Activated CD8-positive, alpha-beta memory T cell treated with anti-CD3 and anti-CD28 coated beads, Interleukin-2, amount 10 ng/mL, durations not matched to agents 7 days and 5 days (primary cell): ENCODE measurements at regions of chr12 and their contacts with region 1.

Region 1: GRCh38 chr12:49347384-49348237 is 923 bp downstream of the DNAJC22 start:
- DNase-seq: peak; percentile 78
- ATAC-seq: peak; percentile 83
- H3K4me3 Mint-ChIP-seq: peak overlapping the region; percentile 61
- H3K27ac Mint-ChIP-seq: no peak overlapping the region
- H3K4me1 Mint-ChIP-seq: peaks cover 30% of the 10 kb centered on the region
- H3K27me3 Mint-ChIP-seq: peaks cover 75% of the 10 kb centered on the region

Region 2: GRCh38 chr12:48851883-48852733 is 495.5 kb before region 1 on chr12 and contains the start of gene DDX23:
- CTCF ChIA-PET with region 1: no interaction called
- DNase-seq: peak; percentile 97
- ATAC-seq: peak; percentile 94
- H3K4me3 Mint-ChIP-seq: peak within 1 kb of the TSS; percentile 96
- H3K27ac Mint-ChIP-seq: peak within 1 kb of the TSS; percentile 97
- H3K4me1 Mint-ChIP-seq: peaks cover 33% of the 10 kb centered on the region
- H3K27me3 Mint-ChIP-seq: no peaks in the 10 kb centered on the region
- total RNA-seq, gene DDX23: 146 to 157 TPM

Region 3: GRCh38 chr12:49296034-49296835 is 51.4 kb before region 1 on chr12:
- CTCF ChIA-PET with region 1: interaction called, 92 read pairs
- DNase-seq: peak; percentile 77
- ATAC-seq: peak; percentile 71
- H3K4me3 Mint-ChIP-seq: peak overlapping the region; percentile 67
- H3K27ac Mint-ChIP-seq: no peak overlapping the region
- H3K4me1 Mint-ChIP-seq: peaks cover 20% of the 10 kb centered on the region
- H3K27me3 Mint-ChIP-seq: peaks cover 63% of the 10 kb centered on the region

Region 4: DNA sequence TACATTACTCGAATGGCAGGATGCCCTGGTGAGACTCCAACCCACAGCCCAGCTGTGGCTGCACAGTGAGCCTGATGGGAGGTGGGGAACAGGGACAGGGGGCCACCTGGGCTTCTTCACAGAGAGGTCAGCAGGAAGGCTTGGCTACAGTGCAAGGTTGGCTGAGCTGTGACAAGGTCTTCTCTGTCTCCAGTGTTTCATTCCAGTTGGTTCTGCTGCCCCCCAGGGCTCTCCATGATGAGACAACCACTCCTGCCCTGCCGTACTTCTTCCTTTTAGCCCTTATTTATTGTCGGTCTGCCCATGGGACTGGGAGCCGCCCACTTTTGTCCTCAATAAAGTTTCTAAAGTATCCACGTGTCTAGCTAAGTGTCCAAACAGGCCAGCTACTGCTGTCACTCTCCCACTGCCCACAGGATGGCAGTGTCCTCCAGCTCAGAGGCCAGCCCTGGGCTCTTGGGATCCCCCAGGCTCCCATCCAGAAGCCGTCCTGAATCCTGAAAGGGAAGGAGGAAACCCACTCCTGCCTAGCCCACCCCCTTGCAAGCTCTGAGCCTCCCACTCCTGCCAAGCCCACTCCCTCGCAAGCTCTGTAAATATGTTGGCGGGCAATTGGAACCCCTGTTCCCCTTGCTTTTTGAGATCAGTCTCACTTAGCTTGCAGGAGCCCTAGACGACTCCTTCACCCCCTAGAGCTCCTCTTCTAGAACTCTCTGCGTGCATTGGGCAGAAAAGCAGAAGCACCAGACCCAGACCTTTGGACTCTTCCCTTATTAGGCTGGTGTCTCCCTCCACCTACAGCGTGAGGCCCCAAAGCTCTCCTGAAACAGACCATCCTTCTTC is 16.0 kb before region 1 on chr12:
- CTCF ChIA-PET with region 1: interaction called, 85 read pairs
- DNase-seq: no peak
- ATAC-seq: no peak
- H3K4me3 Mint-ChIP-seq: no peak overlapping the region
- H3K27ac Mint-ChIP-seq: no peak overlapping the region
- H3K4me1 Mint-ChIP-seq: peaks cover 7% of the 10 kb centered on the region
- H3K27me3 Mint-ChIP-seq: peaks cover 32% of the 10 kb centered on the region

Region 5: DNA sequence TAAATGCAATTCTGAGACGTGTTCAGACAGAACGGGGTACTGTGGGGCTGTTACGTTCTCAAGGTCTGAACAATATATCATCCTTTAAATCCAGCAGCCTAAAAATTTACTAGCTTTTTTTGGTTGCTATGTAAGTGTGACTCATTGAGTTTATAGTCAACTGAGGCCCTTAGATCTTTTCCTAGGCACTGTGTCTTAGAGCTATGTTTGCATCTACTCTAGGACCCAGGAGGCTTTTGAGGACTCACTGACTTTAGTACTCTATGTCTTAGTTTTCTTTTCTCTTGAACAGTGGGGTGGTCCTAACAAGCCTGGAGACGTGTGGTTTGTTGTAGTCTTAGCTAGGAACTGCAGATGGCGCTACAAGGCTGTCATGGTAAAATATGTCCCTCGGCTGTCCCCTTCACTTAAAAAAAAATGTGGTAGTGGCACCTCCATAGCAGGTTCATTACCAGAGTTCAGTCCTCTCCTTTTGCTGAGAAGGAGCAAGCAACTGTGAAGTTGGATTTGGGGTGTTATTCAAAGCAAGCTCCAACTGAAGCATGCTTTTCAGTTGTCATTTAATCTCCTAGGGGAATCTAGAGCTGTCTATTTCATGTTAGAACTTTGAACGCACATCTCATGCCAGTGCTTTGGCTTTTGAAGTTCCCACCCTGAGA is 11.0 kb after region 1 on chr12:
- CTCF ChIA-PET with region 1: interaction called, 91 read pairs
- DNase-seq: peak; percentile 75
- ATAC-seq: peak; percentile 96
- H3K4me3 Mint-ChIP-seq: no peak overlapping the region
- H3K27ac Mint-ChIP-seq: no peak overlapping the region
- H3K4me1 Mint-ChIP-seq: peaks cover 6% of the 10 kb centered on the region
- H3K27me3 Mint-ChIP-seq: peaks cover 49% of the 10 kb centered on the region

Region 6: GRCh38 chr12:49515266-49515665 is 167.7 kb after region 1 on chr12:
- CTCF ChIA-PET with region 1: interaction called, 35 read pairs
- DNase-seq: no peak
- ATAC-seq: no peak
- H3K4me3 Mint-ChIP-seq: no peak overlapping the region
- H3K27ac Mint-ChIP-seq: no peak overlapping the region
- H3K4me1 Mint-ChIP-seq: peaks cover 3% of the 10 kb centered on the region
- H3K27me3 Mint-ChIP-seq: no peaks in the 10 kb centered on the region

Region 7: DNA sequence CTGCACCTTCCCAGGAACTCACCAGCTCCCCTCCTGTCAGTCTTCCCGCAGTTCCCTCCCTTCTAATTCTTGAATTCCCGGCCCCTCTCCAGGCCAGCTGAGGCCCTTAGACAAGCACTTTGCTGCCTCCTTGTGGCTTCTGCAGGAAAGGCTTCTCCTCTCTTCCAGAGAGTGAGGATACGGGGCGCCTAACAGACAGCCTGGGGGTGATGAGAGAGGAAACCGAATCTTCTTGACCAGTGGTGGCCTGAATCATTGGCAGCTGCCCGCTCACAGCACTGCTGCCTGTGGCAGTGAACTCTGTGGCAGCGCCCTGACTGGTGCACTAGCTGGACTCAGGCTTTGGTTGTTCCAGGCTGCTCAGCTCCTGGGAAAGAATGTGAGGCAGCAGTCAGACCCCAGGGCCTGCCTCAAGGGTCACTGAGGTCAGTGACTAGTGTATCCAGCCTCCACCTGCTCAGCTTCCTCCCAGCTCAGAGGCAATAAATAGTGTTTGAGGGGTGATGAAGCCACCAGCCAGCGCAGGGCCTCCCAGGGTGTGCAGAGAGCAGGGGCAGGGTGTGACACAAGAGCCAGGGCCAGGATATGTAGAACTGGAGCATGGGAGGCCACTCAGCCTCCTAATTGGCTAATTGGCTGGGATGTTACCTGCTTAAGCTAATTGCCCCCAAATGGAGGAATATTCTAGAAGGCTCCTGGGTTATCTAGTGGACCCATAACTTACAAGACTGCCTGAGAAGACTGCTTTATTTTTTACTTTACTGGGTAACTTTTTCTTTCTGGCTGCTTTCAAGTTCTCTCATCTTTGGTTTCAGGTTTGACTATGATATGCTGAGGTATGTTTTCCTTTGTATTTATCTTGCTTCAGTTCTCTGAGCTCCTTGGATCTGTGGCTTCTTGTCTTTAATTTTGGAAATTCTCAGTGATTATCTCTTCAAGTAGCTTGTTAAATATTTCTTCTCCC is 233.2 kb after region 1 on chr12:
- CTCF ChIA-PET with region 1: interaction called, 11 read pairs
- DNase-seq: peak; percentile 79
- ATAC-seq: peak; percentile 87
- H3K4me3 Mint-ChIP-seq: no peak overlapping the region
- H3K27ac Mint-ChIP-seq: no peak overlapping the region
- H3K4me1 Mint-ChIP-seq: peaks cover 20% of the 10 kb centered on the region
- H3K27me3 Mint-ChIP-seq: no peaks in the 10 kb centered on the region